ENCODE measurements at regions of chr14 and their contacts with region 1.

Region 1: GRCh38 chr14:96938946-96939345 is 141.8 kb downstream of the VRK1 start:
- ATAC-seq: no peak
- H3K4me3 ChIP-seq: no peak overlapping the region
- H3K27ac ChIP-seq: no peak overlapping the region
- H3K4me1 ChIP-seq: peaks cover 9 to 18% of the 10 kb centered on the region in 2 donors

Region 2: GRCh38 chr14:96796851-96797581 is 141.9 kb before region 1 on chr14 and contains the start of gene VRK1:
- in situ Hi-C with region 1: loop called in 1 of 9 experiments (anchors 25 kb)
- ATAC-seq: peak; percentile 97 to 100 (median 99)
- H3K4me3 ChIP-seq: peak within 1 kb of the TSS; percentile 47 to 95 (median 85)
- H3K27ac ChIP-seq: peak within 1 kb of the TSS in 1 of 2 donors; percentile 60
- H3K4me1 ChIP-seq: peaks cover 18 to 30% of the 10 kb centered on the region in 2 donors
- total RNA-seq, gene VRK1: 6.8 to 52.5 (median 28.2) TPM

Region 3: GRCh38 chr14:97380539-97380941 is 441.6 kb after region 1 on chr14:
- in situ Hi-C with region 1: no loop called
- ATAC-seq: peak in 3 of 8 experiments; percentile 57 to 65 (median 63)
- H3K4me3 ChIP-seq: no peak overlapping the region
- H3K27ac ChIP-seq: no peak overlapping the region
- H3K4me1 ChIP-seq: peaks cover 18 to 24% of the 10 kb centered on the region in 2 donors

Measured in motor neuron (in vitro differentiated cells).